Heart left ventricle (tissue), 16 donors: ENCODE measurements at regions of chr4 and their contacts with region 1.

Region 1: GRCh38 chr4:145936142-145936996 is 2.3 kb downstream of the ZNF827 start:
- DNase-seq: peak; percentile 74 to 82 (median 78)
- ATAC-seq: peak; percentile 34 to 76 (median 66)
- H3K4me3 ChIP-seq: peak overlapping the region; percentile 70 to 93 (median 80)
- H3K27ac ChIP-seq: peak overlapping the region; percentile 92 to 99 (median 96)
- H3K4me1 ChIP-seq: peaks cover 0 to 31% (median 19%) of the 10 kb centered on the region in 12 donors
- H3K27me3 ChIP-seq: no peaks in the 10 kb centered on the region
- CTCF ChIP-seq: peak in 7 of 12 donors; percentile 10 to 28 (median 12)
- POLR2A ChIP-seq: peak in 1 of 2 donors; percentile 28

Region 2: DNA sequence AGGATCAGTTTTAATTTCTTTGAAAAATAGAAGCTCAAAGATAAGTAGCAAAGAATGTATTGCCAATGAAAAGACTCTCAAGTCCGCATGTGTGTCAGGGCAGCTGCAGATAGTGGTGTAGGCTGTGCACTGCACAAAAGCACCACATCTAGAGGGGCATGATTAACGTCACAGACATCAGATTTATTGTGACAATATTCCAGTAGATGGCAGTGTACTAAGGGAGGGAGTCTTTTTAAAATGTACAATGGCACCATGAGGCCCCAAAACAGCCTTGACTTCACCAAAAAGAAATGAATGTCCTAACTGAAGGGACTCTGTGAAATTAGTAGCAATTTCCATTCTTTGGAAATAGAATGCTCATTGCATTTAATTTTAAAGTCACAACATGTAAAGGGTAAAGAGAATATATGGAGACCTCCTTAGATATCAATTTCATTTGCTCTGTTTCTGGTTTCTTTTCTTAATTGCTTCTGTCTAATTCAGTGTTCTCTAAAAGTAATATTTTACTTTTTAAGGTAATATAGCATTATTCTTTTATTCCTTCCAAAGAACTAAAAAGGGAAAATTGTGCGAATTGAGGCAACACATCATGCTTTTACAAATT is 96.1 kb before region 1 on chr4:
- intact Hi-C with region 1: loop called in 4 of 10 experiments (anchors 5 to 10 kb)
- DNase-seq: no peak
- ATAC-seq: peak; percentile 58 to 86 (median 80)
- H3K4me3 ChIP-seq: no peak overlapping the region
- H3K27ac ChIP-seq: no peak overlapping the region
- H3K4me1 ChIP-seq: peaks cover 0 to 23% (median 0%) of the 10 kb centered on the region in 12 donors
- H3K27me3 ChIP-seq: no peaks in the 10 kb centered on the region
- CTCF ChIP-seq: peak in 11 of 12 donors; percentile 29 to 69 (median 55)
- POLR2A ChIP-seq: no peak

Region 3: GRCh38 chr4:145881989-145882388 is 54.4 kb before region 1 on chr4:
- intact Hi-C with region 1: loop called in 4 of 10 experiments (anchors 5 to 10 kb)
- DNase-seq: no peak
- ATAC-seq: no peak
- H3K4me3 ChIP-seq: no peak overlapping the region
- H3K27ac ChIP-seq: no peak overlapping the region
- H3K4me1 ChIP-seq: peaks cover 4 to 65% (median 30%) of the 10 kb centered on the region in 12 donors
- H3K27me3 ChIP-seq: no peaks in the 10 kb centered on the region
- CTCF ChIP-seq: no peak
- POLR2A ChIP-seq: no peak

Region 4: DNA sequence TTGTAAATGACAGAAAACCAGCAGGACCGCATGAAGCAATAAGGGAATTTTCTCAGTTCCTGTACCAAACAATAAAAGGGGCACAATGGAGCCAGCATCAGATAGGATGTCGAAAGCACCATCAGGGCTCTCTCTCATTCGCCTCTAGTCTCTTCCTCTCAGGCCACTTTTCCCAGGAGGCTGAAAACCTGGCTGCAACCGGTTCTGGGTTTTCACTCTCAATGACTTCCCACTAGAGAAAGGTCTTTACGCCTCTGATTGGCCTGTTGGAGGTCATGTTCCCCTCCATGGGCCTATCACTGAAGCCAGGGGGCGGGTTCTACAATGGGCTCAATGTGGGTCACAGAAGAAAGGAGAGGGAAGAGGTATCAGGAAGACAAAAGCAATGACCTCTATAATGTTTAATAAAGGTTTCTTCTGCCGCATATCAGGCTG is 27.1 kb before region 1 on chr4:
- intact Hi-C with region 1: loop called in 1 of 10 experiments (anchors 2 kb)
- DNase-seq: peak; percentile 70 to 90 (median 84)
- ATAC-seq: peak; percentile 97 to 99 (median 97)
- H3K4me3 ChIP-seq: peak overlapping the region in 11 of 12 donors; percentile 28 to 59 (median 53)
- H3K27ac ChIP-seq: peak overlapping the region; percentile 35 to 91 (median 82)
- H3K4me1 ChIP-seq: peaks cover 0 to 49% (median 20%) of the 10 kb centered on the region in 12 donors
- H3K27me3 ChIP-seq: no peaks in the 10 kb centered on the region
- CTCF ChIP-seq: peak in 1 of 12 donors; percentile 22
- POLR2A ChIP-seq: no peak